ENCODE measurements at regions of chr12 and their contacts with region 1.

Region 1: GRCh38 chr12:92185052-92185451 is 39.4 kb upstream of the BTG1 start:
- DNase-seq: peak; percentile 85
- H3K4me3 Mint-ChIP-seq: peak overlapping the region; percentile 59
- H3K27ac Mint-ChIP-seq: peak overlapping the region; percentile 77
- H3K4me1 Mint-ChIP-seq: peaks cover 51% of the 10 kb centered on the region
- H3K27me3 Mint-ChIP-seq: no peaks in the 10 kb centered on the region

Region 2: DNA sequence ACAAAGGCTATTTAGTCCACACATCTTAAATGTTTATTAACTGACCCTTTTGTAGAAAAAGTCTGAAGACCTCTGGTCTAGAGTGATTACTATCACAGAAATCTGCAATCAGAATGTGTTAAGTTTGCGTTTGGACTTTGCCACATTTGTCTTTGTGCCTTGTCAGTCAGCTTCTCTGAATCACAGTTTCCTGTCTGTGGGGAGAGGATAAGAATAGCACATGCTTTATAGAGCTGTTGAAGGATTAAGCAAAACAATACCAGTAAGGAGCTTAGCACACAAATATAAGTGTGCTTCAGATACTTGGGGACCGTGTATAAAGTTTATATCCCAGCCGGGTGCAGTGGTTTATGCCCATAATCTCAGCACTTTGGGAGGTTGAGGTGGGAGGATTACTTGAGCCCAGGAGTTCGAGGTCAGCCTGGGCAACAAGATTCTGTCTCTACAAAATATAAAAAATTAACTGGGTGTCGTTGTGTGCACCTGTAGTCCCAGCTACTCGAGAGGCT is 23.6 kb after region 1 on chr12:
- intact Hi-C with region 1: loop called (anchors 1 kb)
- DNase-seq: peak; percentile 82
- H3K4me3 Mint-ChIP-seq: peak overlapping the region; percentile 66
- H3K27ac Mint-ChIP-seq: peak overlapping the region; percentile 94
- H3K4me1 Mint-ChIP-seq: peaks cover 36% of the 10 kb centered on the region
- H3K27me3 Mint-ChIP-seq: no peaks in the 10 kb centered on the region

Region 3: DNA sequence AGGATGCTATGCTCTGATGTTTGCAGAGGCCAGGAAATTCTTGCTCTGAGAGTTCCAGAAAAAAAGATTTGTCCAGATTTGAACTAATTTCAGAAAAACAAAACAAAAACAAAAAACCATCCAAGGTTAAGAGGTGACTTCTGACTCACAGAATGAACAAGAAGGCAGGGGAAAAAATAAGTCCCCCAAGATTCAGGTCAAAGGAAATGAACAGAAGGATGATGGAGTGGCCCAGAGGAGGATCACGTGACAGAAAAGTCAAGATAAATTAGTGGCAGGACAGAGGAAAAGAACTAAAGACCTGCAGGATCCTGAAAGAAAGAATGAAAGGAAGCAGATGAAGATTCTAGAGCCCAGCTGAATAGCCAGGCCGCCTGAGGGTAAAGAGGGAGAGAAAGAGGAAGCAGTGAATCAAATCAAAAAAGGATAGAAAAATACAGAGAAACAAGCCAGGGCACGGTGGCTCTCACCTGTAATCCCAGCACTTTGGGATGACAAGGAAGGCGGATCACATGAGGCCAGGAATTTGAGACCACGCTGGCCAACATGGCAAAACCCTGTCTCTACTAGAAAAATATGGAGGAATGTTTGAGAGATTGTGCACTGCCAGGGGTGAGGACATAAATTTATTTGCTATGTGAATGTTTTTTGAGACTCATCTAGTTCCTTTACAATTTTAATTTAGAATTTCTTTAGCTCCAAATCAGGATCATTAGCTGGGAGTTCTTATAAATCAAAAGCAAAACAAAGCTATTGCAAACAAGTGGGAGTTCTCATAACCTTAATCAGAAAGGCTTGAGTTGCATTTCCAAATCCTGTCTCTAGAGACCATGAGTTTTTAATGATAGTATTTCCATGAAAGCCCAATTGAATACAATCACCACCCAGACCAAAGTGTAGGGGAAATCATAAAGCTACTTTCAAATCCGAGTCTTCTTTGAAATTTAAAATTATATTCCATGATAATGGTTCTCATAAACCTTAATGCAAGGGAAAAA is 300.6 kb after region 1 on chr12:
- intact Hi-C with region 1: no loop called
- DNase-seq: no peak
- H3K4me3 Mint-ChIP-seq: no peak overlapping the region
- H3K27ac Mint-ChIP-seq: peak overlapping the region; percentile 34
- H3K4me1 Mint-ChIP-seq: peaks cover 22% of the 10 kb centered on the region
- H3K27me3 Mint-ChIP-seq: no peaks in the 10 kb centered on the region

Measured in activated CD4-positive, alpha-beta T cell treated with anti-CD3 and anti-CD28 coated beads, Interleukin-2, amount 10 ng/mL, durations not matched to agents 24 days and 14 days (primary cell).